ENCODE measurements at regions of chr2 and their contacts with region 1.

Region 1: DNA sequence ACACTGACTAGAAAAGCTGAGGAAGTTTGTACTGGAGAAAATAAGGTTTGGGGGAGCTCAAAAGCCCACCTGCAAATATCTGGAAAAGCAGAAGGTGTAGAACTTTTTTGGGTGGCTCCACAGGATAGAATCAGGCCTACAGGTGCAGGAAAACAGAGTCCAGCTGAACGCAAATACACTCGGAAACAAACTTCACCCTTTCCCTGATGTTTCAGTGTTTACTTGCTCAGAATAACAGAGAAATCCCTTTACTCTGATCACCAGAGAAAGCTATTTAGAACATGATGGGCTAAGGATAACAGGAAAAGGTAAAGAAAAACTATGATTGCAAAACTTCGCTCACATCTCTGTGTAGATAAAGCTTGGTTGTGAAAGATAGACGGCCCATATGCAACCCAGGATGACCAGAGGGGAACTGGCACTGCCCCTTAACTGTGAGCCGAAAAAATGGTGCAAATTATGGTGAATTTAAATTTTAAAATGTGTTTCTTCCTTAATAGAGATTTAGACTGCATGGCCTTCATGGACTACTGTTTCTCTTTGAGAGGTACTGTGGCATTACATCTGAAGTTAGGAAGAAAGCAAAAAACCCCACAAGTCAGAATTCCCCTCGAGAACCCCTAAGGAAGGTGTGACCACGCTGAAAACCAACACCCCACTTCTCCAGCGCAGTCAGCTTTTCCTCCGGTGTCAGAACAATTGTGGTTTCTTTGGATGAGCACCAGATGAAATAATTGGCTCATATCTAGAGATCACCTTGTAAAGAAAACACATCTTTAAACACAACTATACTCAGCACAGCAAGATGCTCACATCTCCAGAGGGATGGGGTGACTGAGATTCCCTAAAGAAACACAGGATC is 84.5 kb upstream of the TMEM247 start:
- DNase-seq: no peak
- H3K4me3 Mint-ChIP-seq: peak overlapping the region; percentile 4
- H3K27ac Mint-ChIP-seq: peak overlapping the region; percentile 69
- H3K4me1 Mint-ChIP-seq: peaks cover 8% of the 10 kb centered on the region
- H3K27me3 Mint-ChIP-seq: peaks cover 29% of the 10 kb centered on the region

Region 2: DNA sequence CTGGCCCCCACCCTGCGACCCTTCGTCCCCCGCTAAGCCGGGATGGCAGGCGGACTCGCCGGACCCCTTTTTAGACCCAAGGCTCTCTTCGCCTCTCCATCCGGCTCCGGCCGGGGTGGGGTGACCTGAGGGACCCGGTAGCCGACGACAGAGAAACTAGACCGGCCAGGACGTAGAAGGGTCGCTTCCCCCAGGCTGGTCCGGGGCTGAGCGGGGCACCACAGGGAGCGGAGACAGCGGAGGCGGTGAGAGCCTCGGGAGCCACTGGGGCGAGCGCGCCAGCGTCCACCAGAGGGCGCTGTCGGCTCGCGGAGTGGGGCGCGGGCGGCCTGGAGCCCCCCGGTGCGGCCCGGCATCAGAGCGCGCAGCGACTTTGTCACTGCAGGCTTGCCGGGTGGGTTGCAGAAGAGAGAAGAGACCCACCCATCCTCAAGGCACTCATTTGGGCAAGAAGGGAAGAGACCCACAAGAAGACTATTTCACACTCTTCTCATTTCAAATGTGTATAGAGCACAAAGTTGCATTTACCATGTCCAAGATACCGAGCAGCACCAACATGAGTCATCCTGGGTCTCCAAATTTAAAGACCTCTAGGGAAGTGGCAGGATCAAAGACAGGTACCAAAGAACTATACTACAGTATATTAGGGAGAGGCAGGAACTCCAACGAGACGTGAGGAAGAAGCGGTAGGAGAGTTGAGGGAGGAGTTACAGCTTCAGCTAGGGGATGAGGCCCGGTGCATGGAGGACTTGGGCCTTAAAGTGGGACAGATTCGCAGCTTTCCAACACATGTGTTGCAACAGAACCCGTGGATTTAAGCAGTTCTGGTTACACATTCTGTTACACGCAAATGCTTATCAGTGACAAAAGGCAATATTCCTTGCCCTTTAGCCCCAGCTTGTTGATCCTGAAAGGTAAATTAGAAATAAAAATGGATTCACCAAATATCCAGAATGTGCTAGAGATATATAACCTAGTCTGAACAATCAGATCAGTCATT is 751.0 kb before region 1 on chr2:
- intact Hi-C with region 1: no loop called
- DNase-seq: peak; percentile 93
- H3K4me3 Mint-ChIP-seq: peak overlapping the region; percentile 76
- H3K27ac Mint-ChIP-seq: no peak overlapping the region
- H3K4me1 Mint-ChIP-seq: peaks cover 12% of the 10 kb centered on the region
- H3K27me3 Mint-ChIP-seq: peaks cover 36% of the 10 kb centered on the region

Region 3: GRCh38 chr2:46421361-46421760 is 26.5 kb after region 1 on chr2:
- intact Hi-C with region 1: loop called (anchors 1 kb)
- DNase-seq: no peak
- H3K4me3 Mint-ChIP-seq: no peak overlapping the region
- H3K27ac Mint-ChIP-seq: no peak overlapping the region
- H3K4me1 Mint-ChIP-seq: no peaks in the 10 kb centered on the region
- H3K27me3 Mint-ChIP-seq: peaks cover 1% of the 10 kb centered on the region

Region 4: DNA sequence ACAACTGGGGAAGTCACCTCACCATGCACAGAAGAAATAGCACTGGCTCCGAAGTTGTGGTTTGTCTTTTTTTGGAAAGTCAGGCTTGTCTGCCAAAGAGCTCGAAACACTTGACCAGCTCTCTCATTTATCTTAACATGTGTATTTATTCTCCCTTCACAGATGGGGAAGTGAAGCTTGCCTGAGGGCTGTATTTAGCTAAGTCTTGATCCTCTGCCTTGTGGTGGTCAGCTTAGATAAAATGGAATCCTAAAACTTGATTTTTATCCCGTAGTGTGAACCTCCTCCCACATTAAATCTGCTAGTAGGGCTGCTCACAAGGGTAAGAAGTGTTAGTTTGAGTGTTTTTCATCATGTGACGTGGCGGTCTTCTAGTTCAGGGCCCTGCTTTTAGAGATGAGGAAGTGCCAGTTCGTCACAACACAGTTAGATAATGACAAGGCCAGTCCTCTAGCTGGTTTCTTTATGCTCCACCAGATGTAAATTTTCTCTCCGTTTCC is 174.2 kb after region 1 on chr2:
- intact Hi-C with region 1: no loop called
- DNase-seq: no peak
- H3K4me3 Mint-ChIP-seq: no peak overlapping the region
- H3K27ac Mint-ChIP-seq: no peak overlapping the region
- H3K4me1 Mint-ChIP-seq: no peaks in the 10 kb centered on the region
- H3K27me3 Mint-ChIP-seq: no peaks in the 10 kb centered on the region